Left cardiac atrium (tissue), 4 donors: ENCODE measurements at regions of chr10 and their contacts with region 1.

Region 1: GRCh38 chr10:110977662-110978061 is 58.3 kb downstream of the SHOC2 start:
- DNase-seq: no peak
- ATAC-seq: peak in 1 of 2 donors; percentile 44

Region 2: DNA sequence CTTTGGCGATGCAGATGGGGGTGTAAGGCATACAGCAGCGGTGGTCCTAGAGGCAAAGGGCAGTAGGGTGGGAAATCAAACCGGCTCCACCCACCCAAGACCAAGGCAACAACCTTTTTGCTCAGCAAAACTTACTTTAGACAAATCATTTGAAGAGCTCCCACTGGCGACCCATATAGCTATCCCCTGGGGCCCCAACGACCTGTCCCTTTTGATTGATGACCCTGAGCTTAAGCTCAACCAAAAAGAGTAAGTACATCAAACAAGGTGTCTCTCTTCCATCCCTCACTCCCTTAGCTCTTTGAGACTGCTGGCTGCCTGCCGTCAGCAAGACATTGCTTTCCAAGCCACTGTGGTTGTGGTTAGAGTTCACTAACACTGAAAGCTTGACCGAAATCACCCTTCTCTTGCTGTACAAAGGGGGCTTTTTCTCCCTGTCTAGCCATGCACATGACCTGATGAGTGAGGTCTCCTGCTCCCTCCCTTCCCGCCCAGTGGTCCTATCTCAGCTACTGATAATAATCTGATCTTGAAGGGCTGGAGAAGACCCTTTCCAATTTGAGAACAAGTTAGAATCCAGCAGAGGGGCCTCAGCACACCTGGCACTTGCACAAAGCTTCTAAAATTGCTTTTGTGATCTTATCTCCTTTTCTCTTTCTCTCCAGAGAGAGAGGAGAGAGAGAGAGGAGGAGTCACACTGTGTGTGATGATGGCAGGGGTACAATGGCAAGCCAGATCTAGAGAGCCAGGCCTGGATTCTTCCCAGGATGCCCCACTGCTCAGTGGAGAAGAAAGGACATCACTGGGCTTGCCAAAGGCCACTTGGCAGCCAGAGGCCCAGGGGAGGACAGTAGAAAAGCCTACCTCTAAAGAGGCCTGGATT is 1096.5 kb before region 1 on chr10:
- intact Hi-C with region 1: no loop called
- DNase-seq: no peak
- ATAC-seq: peak; percentile 9 to 13

Region 3: DNA sequence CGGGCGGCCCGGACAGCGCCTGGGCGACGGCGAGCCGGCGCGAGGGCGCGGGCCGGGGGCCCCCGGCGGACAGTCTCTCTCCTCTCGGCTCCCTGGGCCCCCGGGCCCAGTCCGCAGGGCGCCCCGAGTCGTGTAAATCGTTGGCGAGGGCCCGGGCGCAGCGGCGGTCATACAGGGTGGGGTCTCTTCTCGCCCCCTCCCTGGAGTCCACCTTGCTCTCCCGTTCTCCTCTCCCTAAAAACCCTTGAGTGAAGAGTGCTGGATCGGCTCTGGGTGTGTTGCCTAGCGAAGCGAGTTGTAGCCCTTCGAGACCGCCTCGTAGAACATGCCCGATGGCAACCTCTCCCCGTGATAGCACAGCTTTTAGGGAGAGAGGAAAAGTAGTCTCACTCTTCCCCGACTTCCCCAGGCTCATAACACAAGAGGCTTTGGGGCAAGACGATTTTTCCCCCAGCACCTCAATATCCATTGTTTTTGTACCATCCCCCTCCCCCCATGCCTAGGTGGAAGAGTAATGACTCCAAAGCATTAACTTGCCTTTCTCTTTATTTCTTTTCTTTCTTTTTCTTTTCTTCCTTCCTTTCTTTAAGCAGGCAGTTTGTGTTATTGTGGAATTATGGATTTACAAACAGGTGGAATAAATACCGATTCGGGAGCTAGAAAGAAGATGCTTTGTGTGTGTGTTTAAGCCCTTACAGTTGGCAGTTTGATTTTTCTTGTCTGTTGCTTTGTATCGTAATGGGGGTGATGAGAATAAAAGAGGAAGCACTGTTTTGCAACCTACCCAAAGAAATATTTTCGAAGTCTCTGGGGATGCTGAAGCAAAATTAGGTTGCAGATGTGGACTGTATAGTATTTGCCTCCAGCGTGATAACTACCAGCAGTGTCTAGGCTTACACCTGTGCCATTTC is 57.4 kb before region 1 on chr10:
- intact Hi-C with region 1: loop called in 1 of 2 experiments (anchors 10 kb)
- DNase-seq: peak; percentile 34
- ATAC-seq: no peak

Region 4: GRCh38 chr10:110967645-110968044 is 10.0 kb before region 1 on chr10:
- intact Hi-C with region 1: no loop called
- DNase-seq: no peak
- ATAC-seq: no peak

Region 5: DNA sequence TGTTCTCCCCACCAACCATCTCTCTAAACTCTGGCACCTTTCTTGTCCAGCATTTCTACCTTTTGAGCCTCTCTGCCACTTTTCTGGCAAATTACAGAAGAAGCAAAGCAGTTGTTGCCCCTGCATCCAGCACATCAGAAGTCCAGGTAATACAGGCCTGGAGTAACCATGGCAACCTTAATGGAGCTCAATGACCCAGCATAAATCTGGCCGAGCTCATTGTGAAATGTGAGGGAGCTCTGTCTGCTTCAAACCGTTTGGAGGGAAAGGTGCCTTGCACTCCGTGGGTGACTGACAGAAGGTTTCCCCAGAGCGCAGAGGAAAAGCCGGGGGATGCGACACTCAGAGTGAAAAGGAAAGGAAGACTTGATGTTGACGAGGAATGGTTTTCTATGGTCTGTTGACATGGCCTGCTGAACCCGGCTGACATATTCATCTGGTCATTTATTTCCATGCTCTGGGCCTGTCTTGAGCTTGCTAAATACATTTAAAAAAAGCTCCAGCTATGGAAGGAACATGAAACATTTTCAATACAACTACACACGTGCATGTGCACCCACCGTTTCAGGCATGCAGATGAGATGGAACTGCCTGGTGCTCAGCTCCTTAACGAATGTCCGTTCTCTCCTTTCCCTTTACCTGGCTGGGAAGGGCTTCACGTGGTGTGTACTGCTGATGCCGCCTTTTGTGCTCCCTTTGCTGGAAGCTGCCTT is 174.1 kb after region 1 on chr10:
- intact Hi-C with region 1: no loop called
- DNase-seq: no peak
- ATAC-seq: no peak